ENCODE measurements at regions of chr3 and their contacts with region 1.

Region 1: DNA sequence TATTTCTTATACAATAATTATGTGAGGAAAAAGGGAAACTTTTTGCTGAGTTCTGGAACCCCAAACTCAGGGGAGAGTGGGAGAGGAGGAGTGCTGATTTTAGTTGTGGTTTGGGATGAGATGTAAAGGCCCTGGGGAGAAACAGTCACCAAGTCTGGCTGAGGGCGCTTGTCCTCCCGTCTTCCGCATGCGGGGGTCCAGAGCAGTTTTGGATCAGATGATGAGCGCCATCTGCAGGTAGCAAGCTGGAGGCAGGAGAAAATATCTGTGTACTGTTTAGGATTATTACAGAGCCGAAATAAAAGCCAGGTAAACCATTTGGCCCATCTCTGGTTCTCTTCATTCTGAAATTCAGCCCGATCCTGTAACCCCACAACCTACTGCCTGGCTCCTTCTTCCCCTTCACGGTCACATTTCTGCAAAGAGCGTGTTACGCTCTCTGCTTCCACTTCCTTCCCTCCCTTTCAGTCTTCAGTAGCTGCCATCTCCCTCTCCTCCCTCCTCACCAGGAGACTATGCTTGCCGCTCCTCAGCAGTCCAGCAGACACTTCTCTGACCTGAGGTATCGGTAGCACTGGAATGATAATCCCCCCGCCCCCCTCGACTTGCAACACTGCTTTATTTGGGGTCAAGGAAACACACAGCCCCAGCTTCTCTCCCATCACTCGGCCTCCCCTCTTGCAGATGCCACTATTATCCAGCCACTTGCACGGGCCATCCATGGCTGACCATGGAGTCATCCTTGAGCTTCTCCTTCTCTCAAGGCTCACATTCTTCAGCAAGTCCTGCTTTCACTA is 1.4 kb upstream of the PARP14 start:
- DNase-seq: peak; percentile 87
- ATAC-seq: peak; percentile 38
- H3K4me3 ChIP-seq: peak overlapping the region; percentile 50 to 96 (median 84)
- H3K4me3 Mint-ChIP-seq: peak overlapping the region; percentile 90
- H3K27ac ChIP-seq: peak overlapping the region; percentile 97 to 98
- H3K27ac Mint-ChIP-seq: peak overlapping the region; percentile 92
- H3K4me1 ChIP-seq: peaks cover 48 to 59% of the 10 kb centered on the region in 2 donors
- H3K4me1 Mint-ChIP-seq: peaks cover 61% of the 10 kb centered on the region
- H3K27me3 ChIP-seq: no peaks in the 10 kb centered on the region
- H3K27me3 Mint-ChIP-seq: no peaks in the 10 kb centered on the region
- CTCF ChIP-seq: peak; percentile 77

Region 2: DNA sequence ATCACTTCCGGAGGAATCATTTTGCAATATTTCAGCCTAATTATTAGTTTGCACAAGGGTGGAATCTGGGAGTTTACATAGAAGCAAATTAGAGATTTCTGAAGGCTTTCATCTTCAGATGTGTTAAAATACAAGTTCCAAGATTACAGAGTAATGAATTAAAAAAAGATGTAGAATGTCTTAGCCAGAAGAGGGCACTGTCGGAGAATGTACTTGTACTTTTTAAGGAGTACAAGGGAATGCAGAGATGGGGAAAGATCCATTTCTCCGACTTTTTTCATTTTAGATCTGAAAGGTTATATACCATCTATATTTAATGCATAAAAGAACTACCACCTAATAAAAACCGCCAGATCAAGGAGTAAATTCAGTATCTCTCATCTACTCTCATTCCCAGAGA is 220.3 kb before region 1 on chr3:
- CTCF ChIA-PET with region 1: interaction called, 8 read pairs
- POLR2A ChIA-PET with region 1: no interaction called
- intact Hi-C with region 1: loop called (anchors 1 kb)
- DNase-seq: peak; percentile 19
- ATAC-seq: no peak
- H3K4me3 ChIP-seq: no peak overlapping the region
- H3K4me3 Mint-ChIP-seq: no peak overlapping the region
- H3K27ac ChIP-seq: no peak overlapping the region
- H3K27ac Mint-ChIP-seq: no peak overlapping the region
- H3K4me1 ChIP-seq: no peaks in the 10 kb centered on the region
- H3K4me1 Mint-ChIP-seq: no peaks in the 10 kb centered on the region
- H3K27me3 ChIP-seq: no peaks in the 10 kb centered on the region
- H3K27me3 Mint-ChIP-seq: no peaks in the 10 kb centered on the region
- CTCF ChIP-seq: peak; percentile 49

Region 3: GRCh38 chr3:122621112-122621511 is 58.2 kb before region 1 on chr3:
- CTCF ChIA-PET with region 1: interaction called, 38 read pairs
- POLR2A ChIA-PET with region 1: interaction called, 4 read pairs
- intact Hi-C with region 1: loop called (anchors 2 kb)
- DNase-seq: peak; percentile 56
- ATAC-seq: peak; percentile 39
- H3K4me3 ChIP-seq: no peak overlapping the region
- H3K4me3 Mint-ChIP-seq: peak overlapping the region; percentile 69
- H3K27ac ChIP-seq: peak overlapping the region; percentile 52 to 77
- H3K27ac Mint-ChIP-seq: peak overlapping the region; percentile 92
- H3K4me1 ChIP-seq: peaks cover 36 to 63% of the 10 kb centered on the region in 2 donors
- H3K4me1 Mint-ChIP-seq: peaks cover 67% of the 10 kb centered on the region
- H3K27me3 ChIP-seq: no peaks in the 10 kb centered on the region
- H3K27me3 Mint-ChIP-seq: no peaks in the 10 kb centered on the region
- CTCF ChIP-seq: no peak

Region 4: DNA sequence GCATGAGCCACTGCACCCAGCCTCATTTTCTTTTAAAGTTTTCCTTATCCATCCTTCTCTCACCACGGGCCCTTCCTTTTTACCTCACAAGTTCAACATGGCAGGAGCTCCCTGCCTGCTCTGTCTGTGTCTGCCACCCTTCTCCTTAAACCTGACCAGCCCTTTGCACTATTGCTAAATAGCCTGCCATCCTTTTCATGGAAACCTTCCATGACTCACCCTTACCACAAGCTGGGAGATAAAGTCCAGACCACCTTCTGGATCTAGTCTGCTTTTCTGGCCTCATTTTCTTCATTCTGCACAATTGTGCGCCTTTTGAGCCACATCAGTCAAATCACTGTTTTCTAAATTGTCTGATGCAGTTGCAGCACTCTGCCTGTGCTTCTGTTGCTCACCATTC is 10.3 kb after region 1 on chr3:
- CTCF ChIA-PET with region 1: interaction called, 57 read pairs
- POLR2A ChIA-PET with region 1: interaction called, 3 read pairs
- intact Hi-C with region 1: loop called (anchors 1 kb)
- DNase-seq: no peak
- ATAC-seq: no peak
- H3K4me3 ChIP-seq: peak overlapping the region in 1 of 5 experiments; percentile 11
- H3K4me3 Mint-ChIP-seq: peak overlapping the region; percentile 26
- H3K27ac ChIP-seq: no peak overlapping the region
- H3K27ac Mint-ChIP-seq: no peak overlapping the region
- H3K4me1 ChIP-seq: peaks cover 23 to 37% of the 10 kb centered on the region in 2 donors
- H3K4me1 Mint-ChIP-seq: peaks cover 37% of the 10 kb centered on the region
- H3K27me3 ChIP-seq: no peaks in the 10 kb centered on the region
- H3K27me3 Mint-ChIP-seq: no peaks in the 10 kb centered on the region
- CTCF ChIP-seq: no peak

Region 5: DNA sequence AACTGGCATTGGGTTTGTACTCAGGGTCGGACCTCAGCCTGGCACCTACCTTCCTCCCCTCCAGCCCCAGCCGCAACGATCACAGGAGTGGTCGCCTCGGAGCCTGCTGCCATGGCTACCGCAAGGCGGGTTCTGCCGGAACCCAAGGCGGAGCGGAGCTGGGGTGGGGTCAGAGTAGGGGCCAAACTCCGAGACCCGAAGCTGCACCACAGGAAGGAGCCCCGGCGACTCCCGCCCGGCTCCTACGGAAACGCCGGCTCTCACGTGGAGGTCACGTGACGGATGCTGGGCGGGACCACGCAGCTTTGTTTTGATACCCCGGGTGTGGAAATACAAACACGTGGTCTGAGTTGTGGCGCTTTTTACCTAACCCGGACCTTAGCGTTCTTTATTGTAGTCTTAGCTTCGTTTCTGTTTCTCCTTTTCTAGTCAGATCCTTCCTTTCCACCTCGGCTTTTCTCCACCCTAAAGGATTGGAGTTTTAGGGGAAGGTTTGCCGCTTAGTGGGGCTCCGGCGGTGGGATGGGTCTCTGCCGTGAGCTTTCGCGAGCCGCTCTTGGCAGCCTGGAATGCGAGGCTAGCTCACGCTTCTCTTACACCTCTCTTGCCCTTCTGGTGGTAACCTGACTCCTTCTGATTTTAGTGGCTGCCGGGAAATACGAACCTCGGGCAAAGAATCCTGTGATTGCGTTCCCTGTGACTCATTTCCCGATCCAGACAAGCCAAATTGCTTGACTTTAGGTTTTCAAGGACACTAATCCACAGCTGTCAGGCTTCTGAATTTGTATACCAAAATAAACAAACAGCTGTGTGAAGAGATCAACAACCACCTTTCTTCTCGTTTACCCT is 114.5 kb after region 1 on chr3 and contains the start of gene HSPBAP1:
- CTCF ChIA-PET with region 1: interaction called, 7 read pairs
- POLR2A ChIA-PET with region 1: interaction called, 14 read pairs
- intact Hi-C with region 1: loop called (anchors 2 kb)
- DNase-seq: peak; percentile 96
- ATAC-seq: peak; percentile 57
- H3K4me3 ChIP-seq: peak within 1 kb of the TSS; percentile 58 to 96 (median 83)
- H3K4me3 Mint-ChIP-seq: peak within 1 kb of the TSS; percentile 86
- H3K27ac ChIP-seq: peak within 1 kb of the TSS; percentile 98 to 99
- H3K27ac Mint-ChIP-seq: no peak within 1 kb of the TSS
- H3K4me1 ChIP-seq: peaks cover 23 to 26% of the 10 kb centered on the region in 2 donors
- H3K4me1 Mint-ChIP-seq: peaks cover 27% of the 10 kb centered on the region
- H3K27me3 ChIP-seq: no peaks in the 10 kb centered on the region
- H3K27me3 Mint-ChIP-seq: no peaks in the 10 kb centered on the region
- CTCF ChIP-seq: no peak
- total RNA-seq, gene HSPBAP1: 49.2 and 49.6 TPM in 2 replicates

Region 6: DNA sequence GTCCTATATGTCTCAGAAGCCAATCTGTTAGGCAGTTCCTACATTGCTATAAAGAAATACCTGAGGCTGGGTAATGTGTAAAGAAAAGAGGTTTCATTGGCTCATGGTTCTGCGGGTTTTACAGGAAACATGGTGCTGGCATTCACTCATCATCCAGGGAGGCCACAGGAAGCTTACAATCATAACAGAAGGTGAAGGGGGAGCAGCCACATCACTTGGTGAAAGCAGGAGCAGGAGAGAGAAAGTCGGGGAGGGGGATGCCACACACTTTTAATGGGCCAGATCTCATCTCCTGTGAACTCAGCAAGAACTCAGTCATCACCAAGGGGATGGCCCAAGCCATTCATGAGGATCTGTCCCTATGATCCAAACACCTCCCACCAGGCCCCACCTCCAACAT is 124.7 kb after region 1 on chr3:
- CTCF ChIA-PET with region 1: no interaction called
- POLR2A ChIA-PET with region 1: no interaction called
- intact Hi-C with region 1: no loop called
- DNase-seq: no peak
- ATAC-seq: no peak
- H3K4me3 ChIP-seq: no peak overlapping the region
- H3K4me3 Mint-ChIP-seq: no peak overlapping the region
- H3K27ac ChIP-seq: no peak overlapping the region
- H3K27ac Mint-ChIP-seq: no peak overlapping the region
- H3K4me1 ChIP-seq: no peaks in the 10 kb centered on the region
- H3K4me1 Mint-ChIP-seq: peaks cover 4% of the 10 kb centered on the region
- H3K27me3 ChIP-seq: no peaks in the 10 kb centered on the region
- H3K27me3 Mint-ChIP-seq: no peaks in the 10 kb centered on the region
- CTCF ChIP-seq: no peak

Region 7: DNA sequence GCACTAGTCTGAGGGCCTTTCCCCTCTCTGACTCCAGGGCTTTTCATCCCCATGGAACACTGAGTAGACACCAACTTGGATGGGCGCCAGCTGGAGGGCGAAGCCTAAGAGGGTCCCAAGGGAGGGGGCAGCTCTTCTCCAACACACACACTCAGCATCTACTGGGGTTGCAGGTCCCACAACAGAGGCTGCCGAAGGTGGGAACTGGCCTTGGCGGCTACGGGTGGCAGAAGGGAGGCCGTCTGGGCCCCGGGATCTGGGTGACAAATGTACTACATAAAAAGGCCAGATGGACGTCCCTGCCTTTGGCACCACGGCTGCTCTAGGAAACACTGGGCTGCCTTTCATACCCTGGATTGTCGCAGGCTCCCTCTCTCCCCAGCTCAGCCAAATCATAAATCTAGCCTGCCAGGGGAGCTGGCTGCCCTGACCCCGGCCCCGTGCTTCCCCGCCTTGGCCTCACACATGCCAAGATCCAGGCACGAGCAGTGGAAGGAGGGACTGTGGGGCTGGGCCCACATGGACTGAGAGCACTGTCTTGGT is 316.8 kb after region 1 on chr3:
- CTCF ChIA-PET with region 1: no interaction called
- POLR2A ChIA-PET with region 1: no interaction called
- intact Hi-C with region 1: no loop called
- DNase-seq: no peak
- ATAC-seq: no peak
- H3K4me3 ChIP-seq: no peak overlapping the region
- H3K4me3 Mint-ChIP-seq: no peak overlapping the region
- H3K27ac ChIP-seq: no peak overlapping the region
- H3K27ac Mint-ChIP-seq: no peak overlapping the region
- H3K4me1 ChIP-seq: no peaks in the 10 kb centered on the region
- H3K4me1 Mint-ChIP-seq: no peaks in the 10 kb centered on the region
- H3K27me3 ChIP-seq: peaks cover 0 to 5% (median 2%) of the 10 kb centered on the region in 4 experiments
- H3K27me3 Mint-ChIP-seq: peaks cover 34% of the 10 kb centered on the region
- CTCF ChIP-seq: no peak